SK-N-SH (cell line): ENCODE measurements at regions of chr14 and their contacts with region 1.

Region 1: DNA sequence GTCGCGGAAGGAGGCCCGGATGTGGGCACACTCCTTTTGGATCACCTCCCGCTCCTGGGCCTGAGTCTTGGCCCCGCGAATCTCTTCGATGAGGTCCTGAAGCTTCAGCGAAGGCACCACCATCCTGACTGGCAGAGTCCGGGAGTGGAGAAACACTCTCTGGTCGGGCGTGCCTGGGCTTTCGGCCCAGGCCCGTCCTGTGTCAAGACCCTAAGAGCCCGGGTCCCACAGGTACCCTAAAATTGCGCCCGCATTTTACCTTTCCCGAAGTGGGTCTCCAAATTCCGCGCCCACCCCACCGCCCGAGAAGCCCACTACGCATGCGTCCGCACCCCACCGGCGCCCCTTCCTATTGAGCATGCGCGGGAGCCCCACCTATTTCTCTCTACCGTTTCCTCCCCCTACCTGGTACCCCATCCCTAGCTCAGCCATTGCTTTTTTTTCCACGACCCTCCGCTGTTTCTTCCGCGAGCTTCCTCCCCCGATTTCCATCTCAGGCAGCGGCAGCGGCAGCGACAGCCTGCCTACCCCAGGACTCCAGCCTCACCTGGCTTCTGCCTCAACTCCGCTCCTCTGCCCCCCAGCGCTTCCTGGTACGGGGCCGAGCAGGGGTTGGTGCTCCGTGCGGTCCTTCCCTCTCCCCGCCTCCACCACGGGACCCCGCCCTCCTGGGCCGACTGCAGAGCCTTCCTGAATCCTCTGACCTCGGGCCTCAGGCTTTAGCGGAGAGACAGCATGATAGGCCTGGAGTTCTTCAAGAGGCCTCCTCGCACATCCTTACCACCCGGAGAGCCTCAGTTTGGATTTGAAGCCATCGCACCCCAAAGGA is at the start of gene AP1G2:
- DNase-seq: peak; percentile 92
- H3K4me3 ChIP-seq: peak within 1 kb of the TSS; percentile 64 to 86
- H3K27ac ChIP-seq: peak within 1 kb of the TSS; percentile 39 to 82; a peak in 3 of 4 replicates
- H3K4me1 ChIP-seq: peaks cover 0 to 34% of the 10 kb centered on the region in 2 experiments; a peak in 1 of 4 replicates
- H3K27me3 ChIP-seq: no peaks in the 10 kb centered on the region
- CTCF ChIP-seq: 0 out of 2 replicates have a peak, but pooled peaks have one; percentile 4
- EP300 ChIP-seq: no peak
- RAD21 ChIP-seq: no peak
- polyA plus RNA-seq, gene AP1G2: 88.3 and 114 TPM in 2 replicates

Region 2: DNA sequence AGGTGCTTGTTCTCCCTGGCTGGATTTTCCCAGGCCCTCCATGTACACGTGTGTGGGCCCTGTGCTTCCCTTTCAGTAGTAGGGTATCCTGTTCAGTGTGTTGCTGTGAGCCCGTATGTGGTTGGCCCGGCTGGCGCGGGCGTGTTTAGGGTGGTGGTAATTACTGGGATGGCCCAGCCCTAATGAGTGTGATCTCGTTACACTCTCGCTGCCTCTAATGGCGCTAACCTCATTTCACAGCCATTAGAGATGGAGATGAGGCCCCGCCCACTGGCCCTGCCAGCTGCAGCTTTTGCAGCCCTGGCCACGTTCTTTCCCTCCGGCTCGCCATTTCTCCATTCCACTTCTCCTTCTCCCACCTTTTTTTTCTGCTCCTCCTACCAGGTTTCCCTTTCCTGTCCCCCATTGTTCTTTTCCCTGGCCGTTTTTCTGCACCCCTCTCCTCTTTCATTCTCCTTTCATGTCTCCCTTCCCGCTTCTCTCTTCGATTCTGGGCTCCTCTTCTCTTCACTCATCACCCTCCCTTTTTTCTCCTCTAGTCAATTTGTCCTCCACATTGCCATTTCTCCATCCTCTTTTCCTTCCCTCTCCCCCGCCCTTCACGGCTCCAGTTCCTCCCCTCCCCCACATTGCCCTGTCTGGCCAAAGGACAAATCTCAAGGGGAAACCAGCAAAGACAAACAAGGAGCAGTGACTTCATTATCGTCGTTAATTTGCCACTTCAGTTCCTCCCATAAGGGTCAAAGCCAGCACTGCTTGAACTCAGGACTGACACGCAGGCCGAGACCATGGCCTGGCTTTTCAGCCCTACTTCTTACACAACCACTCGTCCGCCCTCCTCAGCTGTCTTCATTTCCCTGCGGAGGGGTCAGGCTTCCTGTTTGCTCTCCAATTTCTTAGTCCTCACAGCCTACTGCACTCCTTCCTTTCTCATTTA is 22.6 kb before region 1 on chr14:
- CTCF ChIA-PET with region 1: interaction called, 136 read pairs
- POLR2A ChIA-PET with region 1: no interaction called
- DNase-seq: no peak
- H3K4me3 ChIP-seq: no peak overlapping the region
- H3K27ac ChIP-seq: peak overlapping the region in 1 of 2 experiments; percentile 29; a peak in 1 of 4 replicates
- H3K4me1 ChIP-seq: peaks cover 0 to 16% of the 10 kb centered on the region in 2 experiments; a peak in 2 of 4 replicates
- H3K27me3 ChIP-seq: no peaks in the 10 kb centered on the region
- CTCF ChIP-seq: no peak
- EP300 ChIP-seq: no peak
- RAD21 ChIP-seq: no peak